ENCODE measurements at regions of chr2 and their contacts with region 1.

Region 1: DNA sequence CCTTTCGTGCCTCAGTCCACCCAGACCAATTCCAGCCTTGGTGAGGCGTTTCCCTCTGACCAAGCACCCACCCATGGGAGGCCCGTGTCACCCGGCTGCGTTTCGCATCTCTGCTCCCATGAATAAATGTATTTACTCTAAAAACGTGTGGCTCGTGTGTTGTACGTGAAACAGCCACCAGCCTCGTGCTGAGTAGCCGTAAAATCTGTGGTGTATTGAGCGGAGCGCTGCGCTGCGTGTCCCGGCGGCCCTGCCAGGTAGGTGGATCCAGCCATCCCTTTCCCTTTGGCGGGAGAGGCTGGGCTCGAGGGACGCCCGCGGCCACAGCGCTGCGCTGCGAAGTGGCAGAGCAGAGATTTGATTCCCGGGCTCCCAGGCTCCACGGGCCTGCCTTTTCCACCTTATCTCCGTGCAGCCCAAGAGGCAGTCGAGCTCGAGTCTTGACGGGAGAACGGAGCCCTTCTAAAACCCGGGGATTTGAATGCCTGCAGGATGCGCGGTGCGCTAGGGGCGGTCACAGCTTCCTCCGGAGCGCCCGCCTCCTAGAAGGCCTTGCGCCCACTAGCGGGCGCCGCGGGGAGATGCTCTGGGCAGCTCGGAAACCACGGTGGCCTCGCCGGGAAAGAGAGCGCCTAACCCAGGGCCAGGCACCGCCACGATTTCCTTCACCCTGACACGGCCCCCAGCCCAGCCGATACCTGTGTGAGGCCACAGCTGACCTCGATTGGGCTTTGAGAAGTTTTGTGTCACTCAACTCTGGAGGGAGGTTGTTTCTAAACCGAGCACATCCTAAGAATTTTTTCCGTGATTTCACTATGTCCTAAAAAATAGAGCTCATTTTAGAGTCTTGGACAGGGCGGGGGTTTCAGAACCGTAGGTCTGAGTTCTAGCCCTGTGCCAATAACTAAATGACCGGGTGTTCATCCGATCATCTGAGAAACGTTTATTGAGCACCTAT is 3.9 kb upstream of the PSMD1 start:
- DNase-seq: peak; percentile 75 to 92
- ATAC-seq: peak; percentile 52 to 67 (median 59)
- H3K4me3 ChIP-seq: peak overlapping the region; percentile 67
- H3K4me3 Mint-ChIP-seq: peak overlapping the region; percentile 87
- H3K27ac ChIP-seq: no peak overlapping the region
- H3K27ac Mint-ChIP-seq: peak overlapping the region; percentile 36 to 62
- H3K4me1 ChIP-seq: peaks cover 55% of the 10 kb centered on the region
- H3K4me1 Mint-ChIP-seq: peaks cover 46 to 52% of the 10 kb centered on the region in 2 donors
- H3K27me3 ChIP-seq: peaks cover 16% of the 10 kb centered on the region
- H3K27me3 Mint-ChIP-seq: peaks cover 23 to 27% of the 10 kb centered on the region in 2 donors
- CTCF ChIP-seq: peak; percentile 94

Region 2: DNA sequence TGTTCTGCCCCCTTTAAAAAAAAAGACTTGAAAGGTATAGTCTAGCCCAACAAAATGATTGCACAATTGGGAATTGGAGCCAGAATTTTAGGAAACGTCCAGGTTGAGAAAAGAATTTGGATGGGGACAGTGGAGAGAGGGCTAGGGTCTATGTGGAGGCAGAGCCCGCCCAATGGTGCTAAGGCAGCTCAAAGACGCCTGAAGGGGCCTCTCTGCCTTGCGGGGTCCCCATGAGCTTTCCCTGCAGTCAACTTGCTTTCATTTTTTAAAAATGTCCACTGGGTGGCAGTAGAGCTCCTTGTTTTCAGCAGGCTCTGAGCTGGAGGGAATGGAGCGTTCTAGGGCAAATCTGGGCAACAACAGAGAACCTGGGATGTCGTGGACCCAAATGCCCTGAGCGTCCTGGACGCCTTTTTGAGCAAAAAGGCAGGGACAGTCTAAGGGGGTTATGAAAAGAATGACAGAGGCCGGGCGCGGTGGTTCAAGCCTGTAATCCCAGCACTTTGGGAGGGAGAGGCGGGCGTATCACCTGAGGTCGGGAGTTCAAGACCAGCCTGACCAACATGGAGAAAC is 228.3 kb before region 1 on chr2:
- intact Hi-C with region 1: loop called (anchors 1 kb)
- DNase-seq: peak in 1 of 2 donors; percentile 91
- ATAC-seq: peak; percentile 81 to 88 (median 85)
- H3K4me3 ChIP-seq: no peak overlapping the region
- H3K4me3 Mint-ChIP-seq: no peak overlapping the region
- H3K27ac ChIP-seq: no peak overlapping the region
- H3K27ac Mint-ChIP-seq: no peak overlapping the region
- H3K4me1 ChIP-seq: peaks cover 14% of the 10 kb centered on the region
- H3K4me1 Mint-ChIP-seq: peaks cover 7 to 14% of the 10 kb centered on the region in 2 donors
- H3K27me3 ChIP-seq: peaks cover 13% of the 10 kb centered on the region
- H3K27me3 Mint-ChIP-seq: peaks cover 30 to 33% of the 10 kb centered on the region in 2 donors
- CTCF ChIP-seq: peak; percentile 76

Region 3: DNA sequence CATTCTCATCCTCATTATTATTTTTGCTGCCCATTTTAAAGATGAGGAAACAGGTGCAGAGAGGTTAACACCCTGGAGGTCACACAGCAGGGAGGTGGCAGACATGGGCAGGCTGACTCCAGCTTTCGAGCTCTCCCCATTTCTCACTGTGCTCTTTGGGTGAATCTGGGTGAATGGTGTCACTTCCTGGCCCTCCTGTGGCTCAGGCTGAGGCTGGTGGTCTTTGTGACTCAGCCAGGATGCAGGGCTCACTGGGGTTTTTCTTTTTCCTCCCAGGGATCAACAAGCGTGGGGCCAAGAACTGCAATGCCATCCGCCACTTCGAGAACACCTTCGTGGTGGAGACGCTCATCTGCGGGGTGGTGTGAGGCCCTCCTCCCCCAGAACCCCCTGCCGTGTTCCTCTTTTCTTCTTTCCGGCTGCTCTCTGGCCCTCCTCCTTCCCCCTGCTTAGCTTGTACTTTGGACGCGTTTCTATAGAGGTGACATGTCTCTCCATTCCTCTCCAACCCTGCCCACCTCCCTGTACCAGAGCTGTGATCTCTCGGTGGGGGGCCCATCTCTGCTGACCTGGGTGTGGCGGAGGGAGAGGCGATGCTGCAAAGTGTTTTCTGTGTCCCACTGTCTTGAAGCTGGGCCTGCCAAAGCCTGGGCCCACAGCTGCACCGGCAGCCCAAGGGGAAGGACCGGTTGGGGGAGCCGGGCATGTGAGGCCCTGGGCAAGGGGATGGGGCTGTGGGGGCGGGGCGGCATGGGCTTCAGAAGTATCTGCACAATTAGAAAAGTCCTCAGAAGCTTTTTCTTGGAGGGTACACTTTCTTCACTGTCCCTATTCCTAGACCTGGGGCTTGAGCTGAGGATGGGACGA is 174.8 kb before region 1 on chr2:
- intact Hi-C with region 1: loop called (anchors 5 kb)
- DNase-seq: peak; percentile 78 to 86
- ATAC-seq: peak; percentile 84 to 92 (median 91)
- H3K4me3 ChIP-seq: no peak overlapping the region
- H3K4me3 Mint-ChIP-seq: peak overlapping the region; percentile 79
- H3K27ac ChIP-seq: peak overlapping the region; percentile 35
- H3K27ac Mint-ChIP-seq: peak overlapping the region; percentile 70 to 86
- H3K4me1 ChIP-seq: peaks cover 57% of the 10 kb centered on the region
- H3K4me1 Mint-ChIP-seq: peaks cover 28 to 43% of the 10 kb centered on the region in 2 donors
- H3K27me3 ChIP-seq: peaks cover 30% of the 10 kb centered on the region
- H3K27me3 Mint-ChIP-seq: peaks cover 45 to 46% of the 10 kb centered on the region in 2 donors
- CTCF ChIP-seq: no peak

Region 4: DNA sequence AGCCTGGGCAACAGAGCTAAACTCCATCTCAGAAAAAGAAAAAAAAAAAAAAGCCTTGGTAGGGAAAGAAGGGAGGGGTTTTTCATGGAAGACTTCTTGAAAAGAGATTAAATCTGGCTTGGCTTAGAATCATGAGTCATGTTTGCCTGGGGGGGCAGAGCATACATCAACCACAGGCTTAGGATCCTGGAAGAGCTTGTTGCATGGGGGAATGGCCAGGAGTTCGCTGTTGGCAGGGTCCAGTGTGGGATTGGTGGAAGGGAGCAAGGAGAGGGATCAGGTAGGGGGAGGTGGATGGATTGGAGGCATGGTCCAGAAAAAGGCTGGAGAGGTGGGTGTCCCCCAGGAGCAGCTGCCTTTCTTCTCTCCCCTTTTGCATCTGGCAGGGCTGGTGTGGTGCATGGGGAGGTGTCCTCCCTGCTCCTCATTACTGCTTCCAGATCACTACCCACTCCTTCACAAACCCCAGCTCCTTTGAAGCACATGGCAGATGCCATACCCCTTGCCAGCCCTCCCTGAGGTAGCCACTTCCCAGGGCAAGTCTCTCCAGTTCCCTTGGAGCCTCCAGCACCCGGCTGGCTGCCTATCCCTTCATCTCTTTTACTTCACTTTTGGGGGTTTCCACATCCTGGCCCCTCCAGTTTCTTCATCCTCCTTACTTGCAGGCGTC is 148.2 kb after region 1 on chr2:
- intact Hi-C with region 1: no loop called
- DNase-seq: no peak
- ATAC-seq: no peak
- H3K4me3 ChIP-seq: no peak overlapping the region
- H3K4me3 Mint-ChIP-seq: no peak overlapping the region
- H3K27ac ChIP-seq: no peak overlapping the region
- H3K27ac Mint-ChIP-seq: no peak overlapping the region
- H3K4me1 ChIP-seq: peaks cover 13% of the 10 kb centered on the region
- H3K4me1 Mint-ChIP-seq: peaks cover 9 to 13% of the 10 kb centered on the region in 2 donors
- H3K27me3 ChIP-seq: no peaks in the 10 kb centered on the region
- H3K27me3 Mint-ChIP-seq: peaks cover 0 to 5% of the 10 kb centered on the region in 2 donors
- CTCF ChIP-seq: no peak